CD4-positive, alpha-beta memory T cell (primary cell): ENCODE measurements at regions of chr1 and their contacts with region 1.

Region 1: GRCh38 chr1:160837558-160838205 is 25.0 kb downstream of the CD244 start:
- DNase-seq: peak; percentile 88 to 91 (median 89)
- H3K4me3 ChIP-seq: no peak overlapping the region
- H3K4me3 Mint-ChIP-seq: peak overlapping the region in 7 of 8 donors; percentile 52 to 88 (median 71)
- H3K27ac ChIP-seq: peak overlapping the region; percentile 60
- H3K27ac Mint-ChIP-seq: peak overlapping the region; percentile 92 to 99 (median 94)
- H3K4me1 ChIP-seq: peaks cover 48% of the 10 kb centered on the region
- H3K4me1 Mint-ChIP-seq: peaks cover 46 to 69% (median 58%) of the 10 kb centered on the region in 4 donors
- H3K27me3 ChIP-seq: no peaks in the 10 kb centered on the region
- H3K27me3 Mint-ChIP-seq: peaks cover 0 to under 1% of the 10 kb centered on the region in 2 donors

Region 2: GRCh38 chr1:160726498-160727315 is 111.0 kb before region 1 on chr1:
- CTCF ChIA-PET with region 1: interaction called, 32 read pairs
- POLR2A ChIA-PET with region 1: interaction called, 3 read pairs
- intact Hi-C with region 1: loop called (anchors 1 kb)
- DNase-seq: peak; percentile 67 to 76 (median 74)
- H3K4me3 ChIP-seq: no peak overlapping the region
- H3K4me3 Mint-ChIP-seq: no peak overlapping the region
- H3K27ac ChIP-seq: no peak overlapping the region
- H3K27ac Mint-ChIP-seq: no peak overlapping the region
- H3K4me1 ChIP-seq: peaks cover 24% of the 10 kb centered on the region
- H3K4me1 Mint-ChIP-seq: peaks cover 11 to 20% (median 15%) of the 10 kb centered on the region in 4 donors
- H3K27me3 ChIP-seq: no peaks in the 10 kb centered on the region
- H3K27me3 Mint-ChIP-seq: no peaks in the 10 kb centered on the region

Region 3: DNA sequence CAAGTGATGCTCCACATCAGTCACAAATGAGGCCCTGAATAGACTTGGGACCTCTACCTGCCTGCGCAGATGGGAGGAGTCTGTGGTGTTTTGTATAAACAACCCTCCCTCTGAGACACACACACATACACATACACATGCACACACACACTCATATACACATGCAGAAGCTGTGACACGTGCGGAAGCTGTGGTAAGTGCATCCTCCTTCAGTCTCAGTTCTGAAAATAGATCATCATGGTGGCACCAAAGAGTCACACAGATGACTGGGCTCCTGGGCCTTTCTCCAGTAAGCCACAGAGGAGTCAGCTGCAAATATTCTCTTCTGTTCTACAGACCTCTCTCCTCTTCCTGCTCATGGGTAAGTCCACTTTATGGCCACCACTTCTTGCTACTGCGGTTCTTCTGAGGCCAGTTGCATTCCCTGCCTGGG is 41.7 kb before region 1 on chr1 and contains the start of gene LY9:
- CTCF ChIA-PET with region 1: interaction called, 67 read pairs
- POLR2A ChIA-PET with region 1: interaction called, 85 read pairs
- intact Hi-C with region 1: loop called (anchors 1 kb)
- DNase-seq: peak; percentile 90 to 96 (median 95)
- H3K4me3 ChIP-seq: peak within 1 kb of the TSS; percentile 49 to 78
- H3K4me3 Mint-ChIP-seq: peak within 1 kb of the TSS; percentile 97 to 99 (median 98)
- H3K27ac ChIP-seq: peak within 1 kb of the TSS; percentile 82
- H3K27ac Mint-ChIP-seq: peak within 1 kb of the TSS; percentile 90 to 98 (median 97)
- H3K4me1 ChIP-seq: peaks cover 45% of the 10 kb centered on the region
- H3K4me1 Mint-ChIP-seq: peaks cover 37 to 69% (median 48%) of the 10 kb centered on the region in 4 donors
- H3K27me3 ChIP-seq: no peaks in the 10 kb centered on the region
- H3K27me3 Mint-ChIP-seq: no peaks in the 10 kb centered on the region
- total RNA-seq, gene LY9: 131 to 136 TPM

Region 4: GRCh38 chr1:160855181-160855981 is 17.7 kb after region 1 on chr1:
- CTCF ChIA-PET with region 1: interaction called, 43 read pairs
- POLR2A ChIA-PET with region 1: interaction called, 11 read pairs
- intact Hi-C with region 1: no loop called
- DNase-seq: no peak
- H3K4me3 ChIP-seq: no peak overlapping the region
- H3K4me3 Mint-ChIP-seq: no peak overlapping the region
- H3K27ac ChIP-seq: no peak overlapping the region
- H3K27ac Mint-ChIP-seq: no peak overlapping the region
- H3K4me1 ChIP-seq: peaks cover 13% of the 10 kb centered on the region
- H3K4me1 Mint-ChIP-seq: peaks cover 0 to 8% (median 1%) of the 10 kb centered on the region in 4 donors
- H3K27me3 ChIP-seq: no peaks in the 10 kb centered on the region
- H3K27me3 Mint-ChIP-seq: no peaks in the 10 kb centered on the region

Region 5: GRCh38 chr1:160884579-160884978 is 46.9 kb after region 1 on chr1:
- CTCF ChIA-PET with region 1: interaction called, 184 read pairs
- POLR2A ChIA-PET with region 1: interaction called, 5 read pairs
- intact Hi-C with region 1: no loop called
- DNase-seq: peak in 1 of 5 donors; percentile 39
- H3K4me3 ChIP-seq: no peak overlapping the region
- H3K4me3 Mint-ChIP-seq: no peak overlapping the region
- H3K27ac ChIP-seq: no peak overlapping the region
- H3K27ac Mint-ChIP-seq: no peak overlapping the region
- H3K4me1 ChIP-seq: no peaks in the 10 kb centered on the region
- H3K4me1 Mint-ChIP-seq: peaks cover 0 to 1% (median 0%) of the 10 kb centered on the region in 4 donors
- H3K27me3 ChIP-seq: no peaks in the 10 kb centered on the region
- H3K27me3 Mint-ChIP-seq: peaks cover under 1 to 1% of the 10 kb centered on the region in 2 donors

Region 6: GRCh38 chr1:160951443-160952128 is 113.9 kb after region 1 on chr1:
- CTCF ChIA-PET with region 1: interaction called, 369 read pairs
- POLR2A ChIA-PET with region 1: interaction called, 27 read pairs
- intact Hi-C with region 1: loop called (anchors 1 kb)
- DNase-seq: peak; percentile 52 to 70 (median 65)
- H3K4me3 ChIP-seq: no peak overlapping the region
- H3K4me3 Mint-ChIP-seq: no peak overlapping the region
- H3K27ac ChIP-seq: no peak overlapping the region
- H3K27ac Mint-ChIP-seq: no peak overlapping the region
- H3K4me1 ChIP-seq: no peaks in the 10 kb centered on the region
- H3K4me1 Mint-ChIP-seq: peaks cover 6 to 13% (median 7%) of the 10 kb centered on the region in 4 donors
- H3K27me3 ChIP-seq: no peaks in the 10 kb centered on the region
- H3K27me3 Mint-ChIP-seq: no peaks in the 10 kb centered on the region

Region 7: DNA sequence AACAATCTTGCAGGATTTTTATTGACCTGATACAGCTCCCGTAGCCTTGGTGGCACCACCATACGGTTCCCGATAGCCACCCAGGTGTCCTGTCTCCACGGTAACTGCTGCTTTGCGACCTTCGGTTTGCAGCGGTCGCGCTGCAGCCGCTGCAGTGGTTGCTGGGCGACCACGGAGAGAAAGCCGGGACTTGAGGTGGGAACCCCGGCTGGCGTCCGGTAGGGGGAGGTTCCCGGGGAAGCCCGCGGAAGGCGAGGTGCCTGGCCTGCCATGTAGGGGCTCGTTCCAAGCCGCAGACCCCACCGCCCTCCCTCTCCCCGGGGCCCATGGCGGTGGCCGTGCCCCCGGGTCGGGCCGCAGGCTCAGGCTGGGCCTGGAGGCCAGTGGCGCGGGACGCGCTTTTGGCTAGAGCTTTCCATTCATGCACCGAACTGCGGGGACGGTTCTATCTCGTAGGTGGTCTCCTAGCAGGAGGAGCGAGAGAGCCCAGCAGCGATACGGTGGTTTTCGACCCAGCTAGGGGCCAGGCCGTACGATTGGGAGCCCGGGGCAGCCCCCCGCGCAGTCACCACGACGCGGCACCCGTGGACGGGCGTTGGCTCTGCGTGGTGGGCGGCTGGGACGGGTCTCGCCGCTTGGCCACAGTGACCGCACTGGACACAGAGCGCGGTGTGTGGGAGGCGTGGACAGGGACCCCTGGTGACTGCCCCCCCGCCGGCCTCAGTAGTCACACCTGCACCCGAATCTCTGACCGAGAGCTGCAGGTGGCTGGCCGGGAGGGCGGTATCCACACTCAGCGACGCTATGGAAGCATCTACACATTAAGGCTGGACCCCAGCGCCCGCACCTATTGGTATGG is 260.8 kb after region 1 on chr1 and contains the start of gene KLHDC9:
- CTCF ChIA-PET with region 1: interaction called, 10 read pairs
- POLR2A ChIA-PET with region 1: interaction called, 7 read pairs
- intact Hi-C with region 1: loop called (anchors 5 kb)
- DNase-seq: peak; percentile 63 to 81 (median 69)
- H3K4me3 ChIP-seq: peak within 1 kb of the TSS; percentile 54 to 72
- H3K4me3 Mint-ChIP-seq: peak within 1 kb of the TSS; percentile 81 to 94 (median 88)
- H3K27ac ChIP-seq: peak within 1 kb of the TSS; percentile 55
- H3K27ac Mint-ChIP-seq: peak within 1 kb of the TSS; percentile 75 to 100 (median 98)
- H3K4me1 ChIP-seq: peaks cover 22% of the 10 kb centered on the region
- H3K4me1 Mint-ChIP-seq: peaks cover 12 to 27% (median 20%) of the 10 kb centered on the region in 4 donors
- H3K27me3 ChIP-seq: no peaks in the 10 kb centered on the region
- H3K27me3 Mint-ChIP-seq: peaks cover 0 to 2% of the 10 kb centered on the region in 2 donors
- total RNA-seq, gene KLHDC9: 0.52 to 0.53 TPM